Psoas muscle (tissue), 8 donors: ENCODE measurements at regions of chr2 and their contacts with region 1.

Region 1: DNA sequence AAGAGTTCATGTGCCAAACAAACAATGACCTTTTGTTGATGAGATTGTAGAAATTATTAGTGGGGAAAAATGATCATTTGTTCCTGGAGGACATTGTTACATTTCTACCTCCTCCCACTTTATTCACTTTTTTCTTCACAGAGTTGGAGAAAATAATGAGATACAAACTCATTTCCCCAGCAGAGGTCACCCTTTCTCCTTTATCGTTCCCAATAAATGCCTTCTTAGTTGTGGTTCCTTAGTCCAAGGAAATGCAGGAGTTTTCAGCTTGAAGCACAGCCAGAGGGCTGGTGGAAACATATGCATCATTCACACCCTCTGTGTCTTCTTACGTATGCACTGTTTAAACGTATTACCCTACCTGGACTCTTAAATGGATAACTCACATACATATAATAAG is 108.8 kb downstream of the SLC4A3 start:
- DNase-seq: no peak
- ATAC-seq: peak in 3 of 4 donors; percentile 50 to 67 (median 52)
- H3K4me3 ChIP-seq: no peak overlapping the region
- H3K27ac ChIP-seq: no peak overlapping the region
- H3K4me1 ChIP-seq: no peaks in the 10 kb centered on the region
- H3K27me3 ChIP-seq: no peaks in the 10 kb centered on the region
- CTCF ChIP-seq: peak; percentile 56

Region 2: DNA sequence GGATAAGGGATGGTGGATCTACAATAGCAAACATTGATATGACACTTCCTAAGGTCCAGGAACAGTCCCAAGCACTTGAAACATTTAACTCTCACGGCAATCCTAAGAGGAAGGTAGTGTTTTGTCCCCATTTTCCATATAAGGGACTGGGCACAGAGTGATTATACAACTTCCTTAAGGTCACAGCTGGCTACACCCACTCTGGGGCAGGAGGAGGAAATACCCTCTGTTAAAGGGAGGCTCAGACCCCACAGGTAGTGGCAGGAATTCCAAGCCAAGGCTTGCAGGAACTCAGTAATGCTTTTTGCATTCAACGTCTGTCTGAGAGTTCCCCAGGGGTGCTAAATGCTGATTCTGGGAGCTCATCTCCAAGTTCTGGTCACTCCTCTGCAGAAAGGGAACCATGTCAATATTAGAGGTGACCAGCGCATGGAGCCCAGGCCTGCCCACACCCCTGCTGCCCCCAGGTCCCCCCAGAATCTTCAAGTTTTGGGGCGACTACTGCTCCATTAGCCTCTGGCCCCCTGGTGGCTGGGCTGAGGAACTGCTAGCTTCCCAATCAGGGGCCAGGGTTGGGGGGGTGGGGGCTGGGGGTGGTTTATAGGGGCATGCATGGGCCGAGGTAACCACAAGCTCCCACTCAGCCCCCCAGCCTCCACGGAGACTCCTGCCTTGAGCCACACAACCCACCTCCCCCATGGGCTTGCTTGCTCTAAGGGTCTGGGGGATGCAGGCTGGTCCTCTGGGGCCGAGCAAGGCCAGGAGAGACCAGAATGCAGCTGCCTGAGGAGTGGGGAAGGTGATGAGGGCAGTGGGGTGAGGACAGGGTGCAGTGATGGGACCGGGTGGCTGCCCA is 175.9 kb before region 1 on chr2:
- intact Hi-C with region 1: no loop called
- DNase-seq: peak in 1 of 2 donors; percentile 32
- ATAC-seq: peak in 1 of 4 donors; percentile 60
- H3K4me3 ChIP-seq: no peak overlapping the region
- H3K27ac ChIP-seq: no peak overlapping the region
- H3K4me1 ChIP-seq: no peaks in the 10 kb centered on the region
- H3K27me3 ChIP-seq: no peaks in the 10 kb centered on the region
- CTCF ChIP-seq: peak; percentile 60

Region 3: DNA sequence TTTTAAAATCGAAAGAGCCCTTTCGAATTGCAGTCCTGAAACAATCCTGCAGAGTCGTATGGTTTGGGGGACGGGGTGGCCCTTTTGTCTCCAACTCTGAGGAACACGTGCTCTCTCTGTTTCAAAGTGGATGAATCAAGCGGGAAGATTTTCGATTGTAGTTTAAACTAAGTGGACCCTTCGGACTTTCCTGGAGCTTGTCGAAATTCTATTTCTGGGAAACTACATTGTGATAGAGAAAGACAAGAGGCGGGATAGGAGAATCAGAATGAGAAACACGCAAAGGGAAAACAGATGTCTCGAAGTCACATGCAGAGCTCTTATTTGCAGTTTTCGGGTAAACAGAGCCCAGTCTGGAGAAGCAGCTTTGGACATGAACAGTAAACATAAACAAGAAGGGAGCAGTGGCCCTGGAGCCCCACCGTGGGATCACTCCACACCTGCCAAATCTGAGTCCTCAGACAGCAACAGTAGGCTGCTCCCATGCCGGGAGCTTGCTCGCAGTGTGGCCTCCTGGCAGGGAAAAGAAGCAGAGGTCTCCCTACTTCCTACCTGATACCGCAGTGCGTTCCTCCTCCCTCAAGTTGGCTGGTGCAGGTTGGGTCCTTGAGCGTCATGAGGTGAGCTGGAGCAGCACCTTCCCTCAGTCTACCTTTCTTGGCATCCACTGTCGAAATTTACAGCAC is 93.6 kb after region 1 on chr2:
- intact Hi-C with region 1: loop called (anchors 5 to 10 kb)
- DNase-seq: no peak
- ATAC-seq: no peak
- H3K4me3 ChIP-seq: no peak overlapping the region
- H3K27ac ChIP-seq: no peak overlapping the region
- H3K4me1 ChIP-seq: no peaks in the 10 kb centered on the region
- H3K27me3 ChIP-seq: no peaks in the 10 kb centered on the region
- CTCF ChIP-seq: no peak